ENCODE measurements at regions of chr6 and their contacts with region 1.

Region 1: DNA sequence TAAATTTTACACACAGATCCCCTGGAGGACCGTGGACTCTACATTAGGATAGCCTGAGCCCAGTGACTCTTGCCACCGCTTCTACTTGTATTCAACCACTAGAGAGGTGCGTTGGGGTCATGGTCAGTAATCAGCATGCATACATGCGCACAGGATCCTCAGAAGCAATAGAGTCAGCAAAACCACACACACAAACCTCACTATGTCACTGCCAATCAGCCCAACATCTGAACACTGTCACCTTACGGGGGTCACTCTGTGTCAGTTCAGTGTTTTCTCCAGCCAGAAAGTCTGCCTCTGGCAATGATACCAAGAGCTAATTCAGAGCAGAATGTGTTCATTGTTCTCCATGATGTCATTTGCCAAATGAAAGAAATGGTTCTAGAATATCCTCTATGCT is 225.3 kb downstream of the KHDC1L start:
- DNase-seq: peak in 1 of 2 experiments; percentile 26
- H3K4me3 ChIP-seq: no peak overlapping the region
- H3K27ac ChIP-seq: no peak overlapping the region
- H3K4me1 ChIP-seq: no peaks in the 10 kb centered on the region
- H3K27me3 ChIP-seq: no peaks in the 10 kb centered on the region
- CTCF ChIP-seq: no peak

Region 2: GRCh38 chr6:72939004-72939403 is 61.0 kb before region 1 on chr6:
- CTCF ChIA-PET with region 1: no interaction called
- POLR2A ChIA-PET with region 1: no interaction called
- intact Hi-C with region 1: loop called (anchors 5 kb)
- DNase-seq: no peak
- H3K4me3 ChIP-seq: no peak overlapping the region
- H3K27ac ChIP-seq: no peak overlapping the region
- H3K4me1 ChIP-seq: no peaks in the 10 kb centered on the region
- H3K27me3 ChIP-seq: no peaks in the 10 kb centered on the region
- CTCF ChIP-seq: no peak

Region 3: DNA sequence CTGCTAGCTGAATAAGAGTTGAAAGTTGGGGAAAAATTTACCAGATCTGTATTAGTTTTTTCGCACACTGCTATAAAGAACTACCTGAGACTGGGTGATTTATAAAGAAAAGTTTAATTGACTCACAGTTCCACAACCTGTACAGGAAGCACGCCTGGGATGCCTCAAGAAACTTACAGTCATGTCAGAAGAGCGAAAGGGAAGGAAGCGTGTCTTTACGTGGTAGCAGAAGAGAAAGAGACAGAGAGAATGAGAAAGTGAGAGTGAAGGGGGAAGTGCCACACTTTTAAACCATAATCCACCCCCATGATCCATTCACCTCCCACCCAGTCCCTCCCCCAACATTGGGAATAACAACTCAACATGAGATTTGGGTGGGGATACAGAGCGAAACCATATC is 145.7 kb after region 1 on chr6:
- CTCF ChIA-PET with region 1: no interaction called
- POLR2A ChIA-PET with region 1: no interaction called
- intact Hi-C with region 1: no loop called
- DNase-seq: no peak
- H3K4me3 ChIP-seq: no peak overlapping the region
- H3K27ac ChIP-seq: no peak overlapping the region
- H3K4me1 ChIP-seq: no peaks in the 10 kb centered on the region
- H3K27me3 ChIP-seq: no peaks in the 10 kb centered on the region
- CTCF ChIP-seq: no peak